Activated T-helper 1 cell treated with anti-CD3 and anti-CD28 coated beads, Interleukin-12 subunit alpha, Interleukin-12 subunit beta, Interleukin-2, Interleukin-4 antibody, amounts not matched to agents 30 ng/mL and 10 ng/mL and 1 ng/mL, durations not matched to agents 14 hours and 24 hours and 36 hours (primary cell): ENCODE measurements at regions of chr12 and their contacts with region 1.

Region 1: DNA sequence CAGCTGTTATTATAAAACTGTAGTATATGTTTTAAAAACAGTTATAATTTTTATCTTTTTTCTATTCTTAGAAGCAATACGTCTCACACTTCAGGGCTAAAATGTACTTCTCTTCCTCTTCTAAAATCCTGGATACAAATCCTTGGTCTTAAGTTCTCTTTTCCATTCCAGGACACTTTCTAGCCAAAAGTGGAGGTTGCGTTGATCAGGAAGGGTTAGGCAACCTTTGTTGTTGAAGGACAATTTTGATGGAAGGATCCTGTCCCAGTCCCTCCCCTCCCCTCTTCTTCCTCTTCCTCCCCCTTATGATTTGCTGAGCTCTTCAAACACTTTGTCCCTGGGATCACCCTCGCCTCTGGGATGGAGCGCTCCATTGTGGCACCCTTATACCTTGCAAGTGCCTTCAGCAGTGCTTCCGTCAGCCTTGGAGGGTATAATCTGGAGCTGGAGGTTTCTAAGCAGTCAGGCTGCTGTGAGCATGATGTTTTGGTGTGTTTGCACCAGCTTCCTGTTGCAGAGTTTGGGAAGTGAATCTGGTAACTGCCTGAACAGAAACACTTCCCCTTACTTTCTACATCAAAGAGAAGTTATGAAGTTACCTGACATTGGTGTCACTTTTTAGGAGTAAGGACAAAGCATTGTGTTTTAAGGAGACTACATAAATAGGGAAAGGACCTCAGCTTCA is 87.4 kb upstream of the SLC38A2 start:
- DNase-seq: no peak
- H3K4me3 Mint-ChIP-seq: peak overlapping the region; percentile 88
- H3K27ac Mint-ChIP-seq: peak overlapping the region; percentile 99
- H3K4me1 Mint-ChIP-seq: peaks cover 61% of the 10 kb centered on the region
- H3K27me3 Mint-ChIP-seq: no peaks in the 10 kb centered on the region

Region 2: DNA sequence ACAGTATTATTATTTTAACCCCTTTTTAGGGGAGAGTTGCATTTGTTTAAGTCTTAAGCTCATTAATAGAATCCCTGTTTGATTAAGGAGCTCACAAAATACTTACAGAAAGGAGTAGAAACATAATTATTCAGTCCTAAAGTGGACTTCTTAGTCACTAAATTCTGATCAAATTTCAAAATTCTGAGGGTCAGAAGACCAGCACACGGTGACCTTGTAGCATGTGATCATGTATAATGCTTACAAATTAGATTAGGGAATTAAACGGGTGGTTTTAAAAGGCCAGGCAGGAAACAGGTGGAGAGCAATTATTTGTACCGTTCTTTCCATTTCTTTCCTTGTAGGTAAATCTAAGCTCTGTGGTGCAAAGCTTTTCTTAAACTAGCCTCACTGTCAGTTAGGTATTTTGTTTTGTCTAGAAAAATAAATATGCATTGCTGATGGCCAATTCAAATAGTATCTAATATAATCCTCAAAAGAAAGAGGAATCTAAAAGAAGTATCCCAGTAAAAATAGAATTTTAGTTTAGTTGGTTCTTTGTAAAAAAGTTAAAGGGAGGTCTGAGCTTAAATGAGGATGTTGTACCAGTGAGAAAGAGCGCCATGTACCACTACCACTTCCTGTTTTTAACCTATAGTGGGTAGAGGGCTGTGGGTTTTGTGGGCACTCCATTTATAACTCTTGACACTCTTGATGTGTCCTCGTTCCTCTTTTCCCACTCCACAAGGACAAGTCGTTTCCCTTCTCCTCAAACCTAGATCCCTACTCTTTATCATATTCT is 242.3 kb before region 1 on chr12:
- intact Hi-C with region 1: loop called (anchors 2 kb)
- DNase-seq: peak; percentile 64
- H3K4me3 Mint-ChIP-seq: peak overlapping the region; percentile 68
- H3K27ac Mint-ChIP-seq: peak overlapping the region; percentile 92
- H3K4me1 Mint-ChIP-seq: peaks cover 97% of the 10 kb centered on the region
- H3K27me3 Mint-ChIP-seq: no peaks in the 10 kb centered on the region

Region 3: DNA sequence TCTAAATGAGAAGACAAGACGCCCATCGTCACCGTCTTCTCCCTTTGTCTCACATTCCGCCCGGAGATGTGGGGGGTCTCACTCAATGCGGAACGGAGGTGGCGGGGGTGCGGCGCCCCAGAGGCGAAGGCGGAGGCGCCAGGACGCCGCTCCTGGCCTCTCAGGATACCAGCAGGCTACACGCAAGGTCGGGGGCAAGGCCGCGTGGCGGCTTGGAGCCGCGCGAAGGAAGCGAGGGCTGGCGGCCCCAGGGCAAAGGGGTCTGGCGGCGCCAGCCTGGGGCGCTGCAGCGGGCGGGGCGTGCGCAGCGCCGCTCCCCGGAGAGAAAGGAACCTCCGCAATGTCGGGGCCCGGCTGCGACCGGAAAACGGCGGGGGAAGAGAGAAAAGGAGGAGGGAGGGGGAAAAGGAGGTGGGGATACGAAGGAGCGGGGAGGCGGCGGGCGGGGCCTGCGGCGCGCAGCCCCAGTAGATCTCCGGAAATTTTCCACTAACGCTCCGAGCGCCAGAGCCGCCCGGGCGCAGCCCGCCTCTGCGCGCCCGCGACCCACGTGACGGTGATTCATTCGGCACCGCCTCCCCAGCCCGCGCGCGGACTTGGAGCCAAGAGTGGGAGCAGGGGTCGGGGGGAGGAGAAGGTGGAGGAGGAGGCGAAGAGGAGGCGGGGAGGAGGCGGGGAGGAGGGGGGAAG is 76.9 kb before region 1 on chr12:
- intact Hi-C with region 1: loop called (anchors 1 kb)
- DNase-seq: peak; percentile 95
- H3K4me3 Mint-ChIP-seq: peak overlapping the region; percentile 84
- H3K27ac Mint-ChIP-seq: peak overlapping the region; percentile 92
- H3K4me1 Mint-ChIP-seq: peaks cover 54% of the 10 kb centered on the region
- H3K27me3 Mint-ChIP-seq: no peaks in the 10 kb centered on the region

Region 4: GRCh38 chr12:46516933-46517578 is 57.1 kb after region 1 on chr12:
- intact Hi-C with region 1: loop called (anchors 1 kb)
- DNase-seq: no peak
- H3K4me3 Mint-ChIP-seq: peak overlapping the region; percentile 74
- H3K27ac Mint-ChIP-seq: peak overlapping the region; percentile 98
- H3K4me1 Mint-ChIP-seq: peaks cover 60% of the 10 kb centered on the region
- H3K27me3 Mint-ChIP-seq: no peaks in the 10 kb centered on the region

Region 5: GRCh38 chr12:46546634-46547286 is 86.8 kb after region 1 on chr12:
- intact Hi-C with region 1: loop called (anchors 1 kb)
- DNase-seq: peak; percentile 19
- H3K4me3 Mint-ChIP-seq: peak overlapping the region; percentile 34
- H3K27ac Mint-ChIP-seq: peak overlapping the region; percentile 89
- H3K4me1 Mint-ChIP-seq: peaks cover 58% of the 10 kb centered on the region
- H3K27me3 Mint-ChIP-seq: no peaks in the 10 kb centered on the region

Region 6: DNA sequence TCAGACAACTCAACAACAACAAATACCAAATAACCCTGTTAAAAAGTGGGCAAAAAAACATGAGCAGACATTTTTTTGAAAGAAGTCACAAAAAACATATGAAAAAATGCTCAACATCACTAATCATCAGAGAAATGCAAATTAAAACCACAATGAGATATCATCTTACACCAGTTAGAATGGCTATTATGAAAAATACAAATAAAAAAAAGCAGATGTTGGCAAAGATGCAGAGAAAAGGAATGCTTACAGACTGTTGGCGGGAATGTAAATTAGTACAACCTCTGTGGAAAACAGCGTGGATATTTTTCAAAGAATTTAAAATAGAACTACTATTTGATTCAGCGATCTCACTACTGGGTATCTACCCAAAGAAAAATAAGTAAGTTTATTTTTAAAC is 251.8 kb after region 1 on chr12:
- intact Hi-C with region 1: no loop called
- DNase-seq: no peak
- H3K4me3 Mint-ChIP-seq: no peak overlapping the region
- H3K27ac Mint-ChIP-seq: no peak overlapping the region
- H3K4me1 Mint-ChIP-seq: no peaks in the 10 kb centered on the region
- H3K27me3 Mint-ChIP-seq: peaks cover 5% of the 10 kb centered on the region

Region 7: DNA sequence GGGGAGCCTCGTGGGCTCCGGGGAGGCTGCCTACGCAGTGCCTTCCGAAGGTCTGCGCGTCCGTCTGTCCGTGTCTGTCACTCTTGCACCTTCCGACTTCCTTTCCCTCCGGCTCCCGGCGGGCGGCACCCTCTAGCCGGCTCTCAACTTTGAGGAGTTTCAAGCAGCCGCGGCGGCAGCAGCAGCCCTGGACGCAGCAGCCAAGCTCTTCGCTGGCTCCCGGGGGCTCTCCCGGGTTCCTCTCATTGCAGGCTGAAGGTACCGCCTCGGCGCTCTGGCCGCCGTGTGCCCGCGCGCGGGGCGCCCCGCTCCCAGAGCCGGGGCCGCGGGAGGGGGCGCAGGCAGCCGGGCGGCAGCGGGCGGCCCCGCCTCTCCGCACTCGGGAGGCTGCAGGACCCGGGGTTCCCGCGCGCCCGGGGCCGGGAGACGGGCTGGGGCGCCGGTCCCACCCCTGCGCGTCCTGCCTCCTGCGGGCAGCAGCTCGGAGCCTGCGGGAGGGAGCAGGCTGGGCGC is 619.5 kb after region 1 on chr12 and contains the starts of genes AMIGO2 and PCED1B:
- intact Hi-C with region 1: loop called (anchors 5 kb)
- DNase-seq: peak; percentile 63
- H3K4me3 Mint-ChIP-seq: peak within 1 kb of the TSS; percentile 97
- H3K27ac Mint-ChIP-seq: peak within 1 kb of the TSS; percentile 97
- H3K4me1 Mint-ChIP-seq: peaks cover 81% of the 10 kb centered on the region
- H3K27me3 Mint-ChIP-seq: no peaks in the 10 kb centered on the region
- total RNA-seq, gene AMIGO2: 11.6 and 12.5 TPM in 2 replicates
- total RNA-seq, gene PCED1B: 50.8 and 55.5 TPM in 2 replicates